ENCODE measurements at regions of chr17 and their contacts with region 1.

Region 1: GRCh38 chr17:10115071-10115539 is 83.3 kb downstream of the GAS7 start:
- DNase-seq: peak; percentile 70
- ATAC-seq: peak; percentile 85
- H3K4me3 Mint-ChIP-seq: peak overlapping the region; percentile 76
- H3K27ac Mint-ChIP-seq: peak overlapping the region; percentile 96
- H3K4me1 Mint-ChIP-seq: peaks cover 72% of the 10 kb centered on the region
- H3K27me3 Mint-ChIP-seq: no peaks in the 10 kb centered on the region
- CTCF ChIP-seq: no peak

Region 2: GRCh38 chr17:9905902-9906301 is 209.2 kb before region 1 on chr17:
- CTCF ChIA-PET with region 1: no interaction called
- POLR2A ChIA-PET with region 1: no interaction called
- intact Hi-C with region 1: no loop called
- DNase-seq: no peak
- ATAC-seq: no peak
- H3K4me3 Mint-ChIP-seq: no peak overlapping the region
- H3K27ac Mint-ChIP-seq: no peak overlapping the region
- H3K4me1 Mint-ChIP-seq: no peaks in the 10 kb centered on the region
- H3K27me3 Mint-ChIP-seq: peaks cover 5% of the 10 kb centered on the region
- CTCF ChIP-seq: no peak

Region 3: GRCh38 chr17:9971991-9972599 is 143.0 kb before region 1 on chr17:
- CTCF ChIA-PET with region 1: no interaction called
- POLR2A ChIA-PET with region 1: no interaction called
- intact Hi-C with region 1: loop called (anchors 5 kb)
- DNase-seq: no peak
- ATAC-seq: no peak
- H3K4me3 Mint-ChIP-seq: no peak overlapping the region
- H3K27ac Mint-ChIP-seq: no peak overlapping the region
- H3K4me1 Mint-ChIP-seq: peaks cover under 1% of the 10 kb centered on the region
- H3K27me3 Mint-ChIP-seq: no peaks in the 10 kb centered on the region
- CTCF ChIP-seq: no peak

Region 4: DNA sequence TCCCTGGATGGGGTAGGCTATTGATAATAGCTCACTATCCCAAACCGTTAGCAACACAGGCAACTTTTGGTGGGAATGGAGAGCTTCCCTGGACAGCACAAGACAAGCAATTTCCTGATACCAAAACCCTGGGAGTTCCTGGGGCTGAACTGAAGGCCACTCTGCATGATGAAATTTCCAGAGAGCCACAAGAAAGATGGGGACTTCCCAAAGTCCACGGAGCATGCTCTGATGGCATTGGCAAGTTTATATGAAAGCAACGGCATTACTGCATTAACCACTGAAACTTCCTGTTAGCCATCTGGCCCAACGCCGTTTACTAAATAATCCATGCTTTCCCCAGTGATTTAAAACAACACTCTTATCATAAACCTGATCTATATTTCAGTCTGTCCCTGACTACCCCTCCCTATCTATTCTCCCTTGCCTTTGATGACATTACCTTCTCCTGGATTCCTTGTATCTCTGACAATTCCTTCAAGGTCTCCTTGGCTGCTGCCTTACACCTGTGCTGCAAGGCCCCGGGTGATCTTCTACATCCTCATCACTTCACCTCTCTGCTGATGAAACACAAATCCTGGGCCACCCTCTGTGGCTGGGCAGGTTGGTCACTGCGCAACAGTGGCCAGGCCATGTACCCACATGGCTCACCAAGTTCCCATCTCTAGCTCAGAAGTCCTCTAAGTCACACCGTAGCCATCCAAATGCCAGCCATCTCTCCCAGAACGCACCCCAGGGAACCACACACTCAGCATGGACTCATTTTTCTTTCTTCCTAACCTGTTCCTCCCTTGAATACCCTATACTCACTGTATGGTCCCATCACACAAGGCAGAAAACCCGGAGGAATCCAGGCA is 101.5 kb before region 1 on chr17:
- CTCF ChIA-PET with region 1: no interaction called
- POLR2A ChIA-PET with region 1: interaction called, 7 read pairs
- intact Hi-C with region 1: loop called (anchors 1 kb)
- DNase-seq: no peak
- ATAC-seq: peak; percentile 62
- H3K4me3 Mint-ChIP-seq: peak overlapping the region; percentile 35
- H3K27ac Mint-ChIP-seq: peak overlapping the region; percentile 72
- H3K4me1 Mint-ChIP-seq: peaks cover 43% of the 10 kb centered on the region
- H3K27me3 Mint-ChIP-seq: no peaks in the 10 kb centered on the region
- CTCF ChIP-seq: no peak

Region 5: GRCh38 chr17:10050597-10051101 is 64.5 kb before region 1 on chr17:
- CTCF ChIA-PET with region 1: interaction called, 5 read pairs
- POLR2A ChIA-PET with region 1: interaction called, 18 read pairs
- intact Hi-C with region 1: loop called (anchors 1 kb)
- DNase-seq: no peak
- ATAC-seq: peak; percentile 7
- H3K4me3 Mint-ChIP-seq: peak overlapping the region; percentile 68
- H3K27ac Mint-ChIP-seq: peak overlapping the region; percentile 78
- H3K4me1 Mint-ChIP-seq: peaks cover 61% of the 10 kb centered on the region
- H3K27me3 Mint-ChIP-seq: no peaks in the 10 kb centered on the region
- CTCF ChIP-seq: no peak

Region 6: GRCh38 chr17:10149573-10150399 is 34.7 kb after region 1 on chr17:
- CTCF ChIA-PET with region 1: interaction called, 3 read pairs
- POLR2A ChIA-PET with region 1: interaction called, 7 read pairs
- intact Hi-C with region 1: loop called (anchors 1 kb)
- DNase-seq: no peak
- ATAC-seq: peak; percentile 74
- H3K4me3 Mint-ChIP-seq: peak overlapping the region; percentile 69
- H3K27ac Mint-ChIP-seq: peak overlapping the region; percentile 85
- H3K4me1 Mint-ChIP-seq: peaks cover 54% of the 10 kb centered on the region
- H3K27me3 Mint-ChIP-seq: no peaks in the 10 kb centered on the region
- CTCF ChIP-seq: no peak

Region 7: GRCh38 chr17:10226930-10227685 is 112.0 kb after region 1 on chr17:
- CTCF ChIA-PET with region 1: interaction called, 30 read pairs
- POLR2A ChIA-PET with region 1: no interaction called
- intact Hi-C with region 1: loop called (anchors 1 kb)
- DNase-seq: peak; percentile 57
- ATAC-seq: peak; percentile 79
- H3K4me3 Mint-ChIP-seq: no peak overlapping the region
- H3K27ac Mint-ChIP-seq: no peak overlapping the region
- H3K4me1 Mint-ChIP-seq: peaks cover 7% of the 10 kb centered on the region
- H3K27me3 Mint-ChIP-seq: no peaks in the 10 kb centered on the region
- CTCF ChIP-seq: no peak

Measured in activated B cell treated with CpG ODN at 0.5 μM for 24 hours (primary cell).